Common myeloid progenitor, CD34-positive (primary cell): ENCODE measurements at regions of chr12 and their contacts with region 1.

Region 1: GRCh38 chr12:120292661-120293531 is at the start of gene RNU4-1:
- DNase-seq: peak; percentile 93 to 96 (median 94)
- H3K4me3 ChIP-seq: peak within 1 kb of the TSS; percentile 67 to 90 (median 76)
- H3K27ac ChIP-seq: peak within 1 kb of the TSS; percentile 100
- H3K4me1 ChIP-seq: peaks cover 3 to 26% (median 16%) of the 10 kb centered on the region in 4 experiments
- H3K27me3 ChIP-seq: no peaks in the 10 kb centered on the region

Region 2: GRCh38 chr12:120199595-120200306 is 93.1 kb before region 1 on chr12:
- CTCF ChIA-PET with region 1: interaction called, 6 read pairs
- POLR2A ChIA-PET with region 1: interaction called, 48 read pairs
- DNase-seq: peak; percentile 13 to 47 (median 35)
- H3K4me3 ChIP-seq: peak overlapping the region; percentile 86 to 99 (median 96)
- H3K27ac ChIP-seq: peak overlapping the region; percentile 83 to 92
- H3K4me1 ChIP-seq: peaks cover 10 to 46% (median 33%) of the 10 kb centered on the region in 4 experiments
- H3K27me3 ChIP-seq: no peaks in the 10 kb centered on the region

Region 3: DNA sequence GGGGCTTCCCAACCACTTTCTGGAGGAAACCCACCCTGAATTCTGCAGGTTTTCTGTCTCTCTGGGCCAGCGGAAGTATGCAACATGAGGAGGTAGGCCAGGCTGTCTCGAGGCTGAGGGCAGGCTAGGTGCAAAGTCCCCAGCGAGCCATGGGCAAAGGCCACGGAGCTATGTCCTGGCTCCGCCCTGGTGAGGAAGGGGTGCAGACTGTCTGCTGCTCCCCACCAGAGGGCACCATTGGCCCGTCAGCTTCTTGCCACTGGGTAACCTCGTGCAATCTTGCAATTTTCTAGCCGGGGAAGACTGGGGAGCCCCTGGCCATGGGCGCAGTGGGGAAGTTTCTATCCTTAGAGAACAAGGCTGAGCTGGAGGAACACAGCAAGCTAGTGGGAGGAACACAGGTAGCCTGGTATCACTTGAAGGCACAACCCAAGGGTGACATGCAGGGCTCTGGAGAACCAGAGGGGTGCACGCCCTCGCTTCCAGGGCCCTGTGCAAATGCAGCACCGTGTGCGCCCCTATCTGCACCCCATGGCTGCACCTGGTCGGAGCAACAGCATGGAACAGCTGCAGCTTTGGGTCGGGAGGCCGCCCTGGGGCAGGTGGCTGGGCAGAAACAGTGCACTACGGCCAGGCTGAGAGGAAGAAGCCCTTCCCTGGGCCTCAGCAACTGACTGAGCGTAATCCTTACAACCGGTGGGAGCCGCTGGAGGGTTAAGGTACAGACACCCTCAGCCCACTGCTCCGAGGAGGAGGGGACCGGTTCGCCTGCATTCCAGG is 64.4 kb before region 1 on chr12:
- CTCF ChIA-PET with region 1: interaction called, 64 read pairs
- POLR2A ChIA-PET with region 1: interaction called, 113 read pairs
- DNase-seq: peak; percentile 81 to 91 (median 87)
- H3K4me3 ChIP-seq: peak overlapping the region in 4 of 7 experiments; percentile 25 to 42 (median 34)
- H3K27ac ChIP-seq: peak overlapping the region in 1 of 2 experiments; percentile 78
- H3K4me1 ChIP-seq: peaks cover 30 to 98% (median 88%) of the 10 kb centered on the region in 4 experiments
- H3K27me3 ChIP-seq: no peaks in the 10 kb centered on the region

Region 4: GRCh38 chr12:120234643-120235368 is 58.1 kb before region 1 on chr12:
- CTCF ChIA-PET with region 1: interaction called, 64 read pairs
- POLR2A ChIA-PET with region 1: interaction called, 113 read pairs
- DNase-seq: peak in 1 of 3 donors; percentile 24
- H3K4me3 ChIP-seq: peak overlapping the region in 2 of 7 experiments; percentile 18 to 24
- H3K27ac ChIP-seq: peak overlapping the region in 1 of 2 experiments; percentile 16
- H3K4me1 ChIP-seq: peaks cover 28 to 95% (median 90%) of the 10 kb centered on the region in 4 experiments
- H3K27me3 ChIP-seq: no peaks in the 10 kb centered on the region

Region 5: DNA sequence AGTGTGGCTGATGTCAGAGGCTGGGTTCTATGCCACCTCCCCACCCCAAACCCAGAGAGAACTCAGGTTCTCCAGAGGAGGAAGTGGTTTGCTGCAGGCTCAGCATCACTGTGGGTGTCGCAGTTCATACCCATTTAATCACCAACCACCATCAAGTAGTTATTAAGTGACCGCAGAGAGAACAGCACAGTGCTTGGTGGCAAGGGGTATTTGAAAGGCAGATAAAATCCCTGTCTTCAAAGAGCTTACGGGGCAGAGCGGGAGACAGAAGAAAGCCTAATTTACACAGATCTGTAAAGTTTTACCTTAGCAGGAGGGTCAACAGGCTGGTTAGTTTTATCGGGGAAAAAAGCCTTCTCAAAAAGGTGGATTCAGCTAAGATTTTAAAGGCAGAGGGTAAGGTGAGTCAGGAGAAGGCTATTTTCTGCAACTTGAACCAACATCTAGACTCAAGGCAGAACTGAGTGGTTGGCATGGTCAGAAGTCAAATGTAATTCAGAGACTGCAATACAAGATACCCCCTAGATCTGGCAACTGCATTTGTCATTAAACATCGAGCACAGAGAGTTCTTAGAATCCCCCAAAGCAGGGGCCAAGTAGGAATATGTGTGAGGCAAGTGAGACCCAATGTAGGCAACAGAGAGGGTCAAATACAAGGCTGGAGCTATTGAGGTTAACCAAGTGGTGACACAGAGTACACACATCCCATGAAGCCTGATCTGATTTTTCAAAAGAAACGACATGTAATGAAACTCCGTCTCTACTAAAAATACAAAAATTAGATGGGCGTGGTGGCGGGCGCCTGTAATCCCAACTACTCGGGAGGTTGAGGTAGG is 40.6 kb before region 1 on chr12:
- CTCF ChIA-PET with region 1: interaction called, 3 read pairs
- POLR2A ChIA-PET with region 1: interaction called, 10 read pairs
- DNase-seq: peak in 2 of 3 donors; percentile 81
- H3K4me3 ChIP-seq: no peak overlapping the region
- H3K27ac ChIP-seq: no peak overlapping the region
- H3K4me1 ChIP-seq: peaks cover 12 to 64% (median 39%) of the 10 kb centered on the region in 4 experiments
- H3K27me3 ChIP-seq: no peaks in the 10 kb centered on the region

Region 6: GRCh38 chr12:120265473-120266179 is 27.3 kb before region 1 on chr12 and contains the start of gene PXN:
- CTCF ChIA-PET with region 1: interaction called, 6 read pairs
- POLR2A ChIA-PET with region 1: interaction called, 42 read pairs
- DNase-seq: peak; percentile 72 to 85 (median 83)
- H3K4me3 ChIP-seq: peak within 1 kb of the TSS; percentile 67 to 86 (median 79)
- H3K27ac ChIP-seq: peak within 1 kb of the TSS in 1 of 2 experiments; percentile 61
- H3K4me1 ChIP-seq: peaks cover 13 to 60% (median 45%) of the 10 kb centered on the region in 4 experiments
- H3K27me3 ChIP-seq: no peaks in the 10 kb centered on the region

Region 7: GRCh38 chr12:120317224-120318105 is 24.6 kb after region 1 on chr12:
- CTCF ChIA-PET with region 1: interaction called, 10 read pairs
- POLR2A ChIA-PET with region 1: interaction called, 31 read pairs
- DNase-seq: peak; percentile 99 to 100 (median 100)
- H3K4me3 ChIP-seq: peak overlapping the region; percentile 62 to 96 (median 79)
- H3K27ac ChIP-seq: peak overlapping the region; percentile 67 to 92
- H3K4me1 ChIP-seq: peaks cover 5 to 15% (median 10%) of the 10 kb centered on the region in 4 experiments
- H3K27me3 ChIP-seq: no peaks in the 10 kb centered on the region